ENCODE measurements at regions of chr1 and their contacts with region 1.

Region 1: GRCh38 chr1:2586154-2587070 is at the start of gene PRXL2B:
- DNase-seq: peak; percentile 90 to 100 (median 96)
- ATAC-seq: peak; percentile 86
- H3K4me3 ChIP-seq: peak within 1 kb of the TSS; percentile 78
- H3K4me3 Mint-ChIP-seq: peak within 1 kb of the TSS; percentile 81 to 96 (median 92)
- H3K27ac ChIP-seq: peak within 1 kb of the TSS; percentile 87
- H3K27ac Mint-ChIP-seq: peak within 1 kb of the TSS; percentile 87 to 99 (median 96)
- H3K4me1 ChIP-seq: peaks cover 27 to 30% of the 10 kb centered on the region in 2 donors
- H3K4me1 Mint-ChIP-seq: peaks cover 24 to 45% (median 38%) of the 10 kb centered on the region in 7 donors
- H3K27me3 ChIP-seq: no peaks in the 10 kb centered on the region
- H3K27me3 Mint-ChIP-seq: no peaks in the 10 kb centered on the region
- total RNA-seq, gene PRXL2B: 12.3 to 37.0 (median 26.7) TPM

Region 2: DNA sequence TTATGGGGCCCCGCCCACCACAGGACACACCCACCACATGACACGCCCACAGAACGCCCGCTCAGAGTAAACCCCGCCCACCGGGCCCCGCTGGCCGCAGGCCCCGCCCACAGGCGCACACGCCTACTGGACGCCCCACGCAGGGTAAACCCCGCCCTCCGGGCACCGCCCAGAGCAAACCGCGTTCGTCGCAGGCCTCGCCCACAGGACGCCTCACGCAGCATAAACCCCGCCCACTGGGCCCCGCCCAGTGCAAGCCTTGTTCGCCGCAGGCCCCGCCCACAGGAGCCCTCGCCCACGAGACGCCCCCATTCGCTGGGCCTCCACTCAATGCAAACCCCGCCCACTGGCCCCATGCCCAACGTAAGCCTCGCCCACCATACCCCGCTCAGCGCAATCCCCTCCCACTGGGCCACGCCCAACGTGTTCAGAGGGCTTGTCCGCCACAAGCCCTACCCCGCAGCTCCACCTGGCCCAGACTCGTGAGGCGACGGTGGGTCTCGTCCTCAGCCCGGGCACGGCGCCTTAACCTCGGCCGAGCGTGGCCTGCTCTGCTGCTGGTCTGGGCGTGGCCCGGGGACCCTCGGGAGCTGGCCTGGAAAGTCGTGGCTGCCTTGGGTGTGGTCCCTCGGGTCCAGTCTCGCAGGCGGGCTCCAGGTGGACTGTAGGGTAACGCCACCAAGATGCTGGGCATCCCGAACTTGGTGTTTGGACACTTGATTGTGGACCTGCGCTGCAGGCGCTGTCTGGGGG is 666.9 kb before region 1 on chr1:
- CTCF ChIA-PET with region 1: no interaction called
- POLR2A ChIA-PET with region 1: no interaction called
- intact Hi-C with region 1: loop called in 1 of 2 experiments (anchors 10 kb)
- DNase-seq: peak; percentile 99 to 100 (median 100)
- ATAC-seq: peak; percentile 95
- H3K4me3 ChIP-seq: peak overlapping the region; percentile 61
- H3K4me3 Mint-ChIP-seq: peak overlapping the region; percentile 52 to 79 (median 68)
- H3K27ac ChIP-seq: peak overlapping the region; percentile 58
- H3K27ac Mint-ChIP-seq: peak overlapping the region in 8 of 9 donors; percentile 51 to 89 (median 82)
- H3K4me1 ChIP-seq: peaks cover 7 to 16% of the 10 kb centered on the region in 2 donors
- H3K4me1 Mint-ChIP-seq: peaks cover 0 to 7% (median 0%) of the 10 kb centered on the region in 7 donors
- H3K27me3 ChIP-seq: no peaks in the 10 kb centered on the region
- H3K27me3 Mint-ChIP-seq: peaks cover 0 to 4% (median 0%) of the 10 kb centered on the region in 5 donors

Region 3: DNA sequence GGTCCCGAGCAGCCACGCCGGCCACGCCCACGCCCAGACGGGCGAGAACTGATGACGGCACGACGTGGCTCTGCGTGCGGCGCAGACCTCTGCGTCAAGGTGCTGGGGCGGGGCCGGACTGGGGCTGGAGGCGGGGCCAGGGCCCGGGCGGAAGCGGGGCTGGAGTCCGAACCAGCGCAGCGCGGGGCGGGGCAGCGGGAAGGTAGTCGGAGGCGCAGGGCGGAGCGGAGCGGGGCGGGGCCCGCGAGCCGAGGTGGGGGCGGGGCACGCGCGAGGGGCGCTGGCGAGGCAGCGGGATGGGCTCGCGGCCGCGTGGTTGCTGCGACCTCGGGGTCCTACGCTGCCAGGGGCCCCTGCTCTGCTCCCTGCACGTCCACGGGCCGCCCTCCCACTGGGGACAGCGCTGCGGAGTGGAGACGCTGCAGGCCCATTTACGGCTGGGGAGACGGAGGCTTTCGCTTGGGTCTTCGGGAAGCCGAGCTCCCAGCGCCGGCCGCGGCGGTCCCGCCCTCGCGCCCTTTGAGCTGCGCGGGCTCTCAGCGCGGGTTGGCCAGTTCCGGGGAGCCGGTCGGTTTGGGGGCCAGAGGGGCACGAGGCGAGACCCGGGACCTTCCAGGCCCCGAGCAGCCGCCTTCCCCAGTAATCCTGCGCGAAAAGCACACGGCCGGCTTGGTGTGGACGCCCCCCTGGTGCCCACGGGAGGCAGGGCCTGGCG is 173.7 kb before region 1 on chr1 and contains the start of gene PEX10:
- CTCF ChIA-PET with region 1: no interaction called
- POLR2A ChIA-PET with region 1: interaction called, 10 read pairs
- intact Hi-C with region 1: loop called (anchors 1 kb)
- DNase-seq: peak; percentile 95 to 100 (median 98)
- ATAC-seq: peak; percentile 97
- H3K4me3 ChIP-seq: peak within 1 kb of the TSS; percentile 71
- H3K4me3 Mint-ChIP-seq: peak within 1 kb of the TSS; percentile 83 to 91 (median 86)
- H3K27ac ChIP-seq: peak within 1 kb of the TSS; percentile 95
- H3K27ac Mint-ChIP-seq: peak within 1 kb of the TSS; percentile 31 to 94 (median 87)
- H3K4me1 ChIP-seq: peaks cover 37 to 45% of the 10 kb centered on the region in 2 donors
- H3K4me1 Mint-ChIP-seq: peaks cover 27 to 45% (median 35%) of the 10 kb centered on the region in 7 donors
- H3K27me3 ChIP-seq: no peaks in the 10 kb centered on the region
- H3K27me3 Mint-ChIP-seq: no peaks in the 10 kb centered on the region
- total RNA-seq, gene PEX10: 8.7 to 14.9 (median 12.3) TPM

Region 4: GRCh38 chr1:2575801-2576663 is 10.4 kb before region 1 on chr1:
- CTCF ChIA-PET with region 1: no interaction called
- POLR2A ChIA-PET with region 1: interaction called, 26 read pairs
- intact Hi-C with region 1: loop called (anchors 1 kb)
- DNase-seq: no peak
- ATAC-seq: no peak
- H3K4me3 ChIP-seq: no peak overlapping the region
- H3K4me3 Mint-ChIP-seq: peak overlapping the region in 3 of 10 donors; percentile 25 to 76 (median 35)
- H3K27ac ChIP-seq: peak overlapping the region; percentile 8
- H3K27ac Mint-ChIP-seq: peak overlapping the region in 7 of 9 donors; percentile 43 to 96 (median 62)
- H3K4me1 ChIP-seq: peaks cover 20 to 33% of the 10 kb centered on the region in 2 donors
- H3K4me1 Mint-ChIP-seq: peaks cover 23 to 59% (median 48%) of the 10 kb centered on the region in 7 donors
- H3K27me3 ChIP-seq: no peaks in the 10 kb centered on the region
- H3K27me3 Mint-ChIP-seq: no peaks in the 10 kb centered on the region

Region 5: GRCh38 chr1:3900119-3900968 is 1313.9 kb after region 1 on chr1 and contains the start of gene C1orf174:
- CTCF ChIA-PET with region 1: no interaction called
- POLR2A ChIA-PET with region 1: no interaction called
- intact Hi-C with region 1: loop called in 1 of 2 experiments (anchors 5 kb)
- DNase-seq: peak; percentile 78 to 99 (median 96)
- ATAC-seq: peak; percentile 88
- H3K4me3 ChIP-seq: peak within 1 kb of the TSS; percentile 79
- H3K4me3 Mint-ChIP-seq: peak within 1 kb of the TSS; percentile 90 to 96 (median 94)
- H3K27ac ChIP-seq: peak within 1 kb of the TSS; percentile 94
- H3K27ac Mint-ChIP-seq: peak within 1 kb of the TSS; percentile 92 to 99 (median 96)
- H3K4me1 ChIP-seq: peaks cover 6 to 39% of the 10 kb centered on the region in 2 donors
- H3K4me1 Mint-ChIP-seq: peaks cover 23 to 71% (median 53%) of the 10 kb centered on the region in 7 donors
- H3K27me3 ChIP-seq: no peaks in the 10 kb centered on the region
- H3K27me3 Mint-ChIP-seq: no peaks in the 10 kb centered on the region
- total RNA-seq, gene C1orf174: 17.0 to 33.6 (median 27.1) TPM

Measured in naive thymus-derived CD4-positive, alpha-beta T cell (primary cell).